Caco-2 (cell line): ENCODE measurements at regions of chr1 and their contacts with region 1.

Region 1: GRCh38 chr1:23577056-23578004 is 18.0 kb upstream of the ID3 start:
- DNase-seq: peak in 1 of 2 experiments; percentile 52
- H3K4me3 ChIP-seq: no peak overlapping the region
- H3K4me3 Mint-ChIP-seq: peak overlapping the region; percentile 64
- H3K27ac Mint-ChIP-seq: peak overlapping the region; percentile 96
- H3K4me1 ChIP-seq: peaks cover 49% of the 10 kb centered on the region
- H3K4me1 Mint-ChIP-seq: peaks cover 30% of the 10 kb centered on the region
- H3K27me3 ChIP-seq: no peaks in the 10 kb centered on the region
- H3K27me3 Mint-ChIP-seq: no peaks in the 10 kb centered on the region
- CTCF ChIP-seq: no peak

Region 2: DNA sequence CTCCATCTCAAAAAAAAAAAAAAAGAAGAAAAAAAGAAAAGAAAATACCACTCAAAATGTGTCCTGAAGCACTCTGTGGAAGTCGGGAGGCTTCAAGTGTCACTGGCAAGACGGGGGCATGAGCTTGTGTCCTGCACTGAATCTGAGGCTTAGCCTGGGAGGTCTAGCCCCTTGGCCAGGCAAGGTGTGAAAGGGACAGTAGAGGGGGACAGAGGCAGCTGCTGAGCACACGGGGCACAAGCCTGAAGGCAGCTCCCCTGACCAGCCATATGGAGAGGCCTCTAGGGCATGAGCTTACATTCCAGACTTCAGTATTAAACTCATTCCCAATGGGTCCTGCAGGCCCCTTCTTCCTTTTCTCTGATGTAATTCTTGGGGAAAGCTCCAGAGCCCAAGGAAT is 69.8 kb before region 1 on chr1:
- CTCF ChIA-PET with region 1: no interaction called
- POLR2A ChIA-PET with region 1: no interaction called
- intact Hi-C with region 1: no loop called
- DNase-seq: no peak
- H3K4me3 ChIP-seq: no peak overlapping the region
- H3K4me3 Mint-ChIP-seq: no peak overlapping the region
- H3K27ac Mint-ChIP-seq: no peak overlapping the region
- H3K4me1 ChIP-seq: no peaks in the 10 kb centered on the region
- H3K4me1 Mint-ChIP-seq: peaks cover 7% of the 10 kb centered on the region
- H3K27me3 ChIP-seq: no peaks in the 10 kb centered on the region
- H3K27me3 Mint-ChIP-seq: no peaks in the 10 kb centered on the region
- CTCF ChIP-seq: no peak

Region 3: DNA sequence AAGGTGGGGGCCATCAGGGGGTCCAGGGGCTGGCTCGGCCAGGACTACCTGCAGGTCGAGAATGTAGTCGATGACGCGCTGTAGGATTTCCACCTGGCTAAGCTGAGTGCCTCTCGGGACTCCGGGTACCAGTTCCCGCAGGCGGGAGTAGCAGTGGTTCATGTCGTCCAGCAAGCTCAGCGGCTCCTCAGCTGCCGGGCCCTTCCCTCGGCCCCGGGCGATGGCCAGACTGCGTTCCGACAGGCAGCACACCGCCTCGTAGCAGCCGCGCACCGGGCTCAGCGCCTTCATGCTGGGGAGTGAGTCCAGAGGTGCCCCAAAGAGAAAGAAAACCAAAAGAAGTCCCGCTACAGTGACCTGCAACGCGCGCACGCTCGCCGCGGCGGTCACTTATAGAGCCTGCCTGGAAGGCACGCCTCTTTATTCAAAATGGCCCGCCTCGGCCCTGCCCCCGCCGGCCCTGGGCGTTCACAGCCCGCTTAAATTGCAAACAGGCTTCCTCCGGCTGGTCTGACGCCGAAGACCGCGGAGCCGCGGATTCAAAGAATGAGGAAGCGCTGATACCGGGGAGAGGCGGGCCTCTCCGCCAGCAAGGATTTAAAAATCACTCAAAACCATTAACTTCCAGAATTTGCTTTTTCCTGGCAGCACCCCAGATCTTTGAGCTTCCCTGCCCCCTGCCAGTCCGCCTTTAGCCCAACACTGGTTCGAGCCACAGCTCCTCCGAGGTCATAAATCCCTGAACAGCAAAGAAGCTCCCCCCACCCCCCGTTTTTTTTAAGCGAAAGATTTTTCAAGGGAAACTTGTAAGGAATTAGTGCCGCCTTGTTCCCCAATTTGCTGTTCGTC is 18.0 kb before region 1 on chr1 and contains the start of gene ID3:
- CTCF ChIA-PET with region 1: interaction called, 10 read pairs
- POLR2A ChIA-PET with region 1: interaction called, 46 read pairs
- intact Hi-C with region 1: loop called (anchors 2 kb)
- DNase-seq: peak; percentile 92 to 94
- H3K4me3 ChIP-seq: peak within 1 kb of the TSS; percentile 68
- H3K4me3 Mint-ChIP-seq: peak within 1 kb of the TSS; percentile 87
- H3K27ac Mint-ChIP-seq: peak within 1 kb of the TSS; percentile 97
- H3K4me1 ChIP-seq: peaks cover 71% of the 10 kb centered on the region
- H3K4me1 Mint-ChIP-seq: peaks cover 46% of the 10 kb centered on the region
- H3K27me3 ChIP-seq: no peaks in the 10 kb centered on the region
- H3K27me3 Mint-ChIP-seq: no peaks in the 10 kb centered on the region
- CTCF ChIP-seq: no peak
- total RNA-seq, gene ID3: 13.7 and 18.0 TPM in 2 replicates

Region 4: DNA sequence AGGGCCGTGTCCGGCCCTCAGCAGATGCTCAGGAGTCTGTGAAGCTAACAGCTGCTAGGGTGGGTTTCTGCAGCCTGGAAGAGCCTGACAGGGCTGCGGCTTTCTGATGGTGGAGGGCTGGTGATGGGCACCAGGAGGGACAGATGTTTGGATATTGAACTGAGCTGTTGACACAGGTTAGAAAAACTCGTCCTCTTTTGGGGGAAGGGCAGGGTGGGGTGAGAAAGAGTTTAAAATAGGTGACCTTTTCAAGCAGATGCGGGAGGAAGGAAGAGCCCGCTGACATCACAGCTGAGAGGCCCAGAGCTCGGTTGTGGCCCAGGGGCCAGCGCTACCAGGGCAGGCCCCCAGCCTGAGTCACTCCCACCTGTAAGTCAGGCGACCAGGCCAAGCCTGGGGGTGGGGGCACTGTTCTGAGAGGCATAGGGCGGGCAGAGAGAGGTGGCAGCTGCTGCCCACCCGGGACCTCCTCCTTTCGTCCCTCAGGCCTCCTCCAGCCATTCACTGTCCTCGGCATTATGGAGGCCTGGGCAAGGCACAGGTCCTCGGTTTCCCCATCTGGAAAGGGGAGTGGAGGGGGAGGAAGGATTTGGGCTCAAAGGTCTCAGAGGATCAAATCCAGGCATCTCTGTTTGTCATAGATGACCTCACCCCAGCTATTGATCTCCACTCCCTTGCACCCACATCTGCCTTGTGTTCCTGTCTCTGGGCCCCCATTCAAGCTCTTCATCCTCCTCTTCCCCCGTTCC is 14.3 kb after region 1 on chr1:
- CTCF ChIA-PET with region 1: no interaction called
- POLR2A ChIA-PET with region 1: no interaction called
- intact Hi-C with region 1: loop called (anchors 2 kb)
- DNase-seq: no peak
- H3K4me3 ChIP-seq: no peak overlapping the region
- H3K4me3 Mint-ChIP-seq: no peak overlapping the region
- H3K27ac Mint-ChIP-seq: peak overlapping the region; percentile 13
- H3K4me1 ChIP-seq: peaks cover 12% of the 10 kb centered on the region; the same call in 1 of the 2 replicates
- H3K4me1 Mint-ChIP-seq: peaks cover 10% of the 10 kb centered on the region
- H3K27me3 ChIP-seq: no peaks in the 10 kb centered on the region
- H3K27me3 Mint-ChIP-seq: no peaks in the 10 kb centered on the region
- CTCF ChIP-seq: no peak

Region 5: DNA sequence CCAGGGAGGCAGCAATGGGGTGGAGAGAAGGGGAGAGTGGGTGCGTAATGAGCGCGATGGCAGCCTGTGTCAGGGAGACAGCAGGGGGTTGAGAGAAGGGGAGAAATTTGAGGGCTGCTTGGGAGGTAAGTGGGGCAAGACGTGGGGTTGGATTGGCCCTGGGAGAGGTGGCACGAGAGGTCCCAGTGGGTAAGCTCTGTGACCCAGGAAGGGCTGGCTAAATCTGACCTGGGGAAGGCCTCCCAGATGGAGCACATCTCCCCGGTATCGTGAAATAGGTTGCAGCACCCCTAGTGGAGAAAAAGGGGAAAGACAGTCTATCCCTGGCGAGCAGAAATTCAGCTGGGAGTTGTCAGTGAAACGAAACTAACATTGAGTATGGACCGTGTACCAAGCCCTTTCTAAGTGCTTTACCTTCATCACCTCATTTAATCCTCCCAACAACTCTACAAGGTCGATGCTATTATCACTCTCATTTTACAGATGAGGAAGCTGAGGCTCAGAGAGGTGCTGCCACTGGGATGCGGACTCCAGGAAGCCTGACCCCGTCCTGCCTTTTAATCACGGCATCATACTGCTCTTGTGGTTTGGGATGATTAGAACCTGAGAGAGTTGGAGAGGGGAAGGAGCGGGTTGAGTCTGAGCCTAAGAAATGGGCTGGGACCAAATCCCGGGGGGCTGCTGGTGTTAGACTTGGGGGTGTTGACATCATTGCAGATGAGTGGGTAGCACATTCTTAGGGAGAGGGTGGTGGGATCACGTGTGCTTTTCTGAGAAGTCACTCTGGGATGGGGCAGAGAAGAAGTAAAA is 57.7 kb after region 1 on chr1:
- CTCF ChIA-PET with region 1: interaction called, 22 read pairs
- POLR2A ChIA-PET with region 1: interaction called, 3 read pairs
- intact Hi-C with region 1: no loop called
- DNase-seq: peak; percentile 51 to 65
- H3K4me3 ChIP-seq: no peak overlapping the region
- H3K4me3 Mint-ChIP-seq: no peak overlapping the region
- H3K27ac Mint-ChIP-seq: no peak overlapping the region
- H3K4me1 ChIP-seq: no peaks in the 10 kb centered on the region
- H3K4me1 Mint-ChIP-seq: peaks cover 8% of the 10 kb centered on the region
- H3K27me3 ChIP-seq: no peaks in the 10 kb centered on the region
- H3K27me3 Mint-ChIP-seq: peaks cover 3% of the 10 kb centered on the region
- CTCF ChIP-seq: peak; percentile 75 to 81

Region 6: DNA sequence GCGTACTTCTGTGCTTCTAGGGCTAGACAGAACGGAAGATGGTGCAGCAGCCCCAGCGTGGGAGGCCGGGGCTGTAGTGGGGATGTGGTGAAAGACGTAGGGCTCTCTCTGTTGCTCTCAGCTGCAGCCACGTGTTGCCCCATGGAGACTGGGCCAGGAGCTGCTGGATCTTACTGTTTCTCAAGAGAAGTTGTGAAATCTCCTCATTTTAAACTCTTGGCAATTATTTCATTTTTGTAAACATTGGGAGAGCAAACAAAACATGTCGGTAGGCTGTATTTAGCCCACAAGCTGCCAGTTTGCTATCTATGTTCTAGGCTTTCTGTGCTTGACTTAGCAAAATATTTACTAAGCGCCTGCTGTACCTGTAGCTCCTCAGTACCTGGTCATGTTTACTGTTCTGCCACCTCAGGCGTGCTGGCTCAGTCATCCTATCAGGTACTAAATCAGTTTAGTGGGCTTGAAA is 150.1 kb after region 1 on chr1:
- CTCF ChIA-PET with region 1: no interaction called
- POLR2A ChIA-PET with region 1: no interaction called
- intact Hi-C with region 1: no loop called
- DNase-seq: peak; percentile 38 to 52
- H3K4me3 ChIP-seq: no peak overlapping the region
- H3K4me3 Mint-ChIP-seq: no peak overlapping the region
- H3K27ac Mint-ChIP-seq: peak overlapping the region; percentile 54
- H3K4me1 ChIP-seq: peaks cover 7% of the 10 kb centered on the region; the same call in 1 of the 2 replicates
- H3K4me1 Mint-ChIP-seq: peaks cover 17% of the 10 kb centered on the region
- H3K27me3 ChIP-seq: no peaks in the 10 kb centered on the region
- H3K27me3 Mint-ChIP-seq: no peaks in the 10 kb centered on the region
- CTCF ChIP-seq: no peak

Region 7: GRCh38 chr1:23763041-23763577 is 185.8 kb after region 1 on chr1:
- CTCF ChIA-PET with region 1: no interaction called
- POLR2A ChIA-PET with region 1: no interaction called
- intact Hi-C with region 1: no loop called
- DNase-seq: no peak
- H3K4me3 ChIP-seq: no peak overlapping the region
- H3K4me3 Mint-ChIP-seq: no peak overlapping the region
- H3K27ac Mint-ChIP-seq: no peak overlapping the region
- H3K4me1 ChIP-seq: no peaks in the 10 kb centered on the region
- H3K4me1 Mint-ChIP-seq: no peaks in the 10 kb centered on the region
- H3K27me3 ChIP-seq: no peaks in the 10 kb centered on the region
- H3K27me3 Mint-ChIP-seq: no peaks in the 10 kb centered on the region
- CTCF ChIP-seq: no peak

Region 8: DNA sequence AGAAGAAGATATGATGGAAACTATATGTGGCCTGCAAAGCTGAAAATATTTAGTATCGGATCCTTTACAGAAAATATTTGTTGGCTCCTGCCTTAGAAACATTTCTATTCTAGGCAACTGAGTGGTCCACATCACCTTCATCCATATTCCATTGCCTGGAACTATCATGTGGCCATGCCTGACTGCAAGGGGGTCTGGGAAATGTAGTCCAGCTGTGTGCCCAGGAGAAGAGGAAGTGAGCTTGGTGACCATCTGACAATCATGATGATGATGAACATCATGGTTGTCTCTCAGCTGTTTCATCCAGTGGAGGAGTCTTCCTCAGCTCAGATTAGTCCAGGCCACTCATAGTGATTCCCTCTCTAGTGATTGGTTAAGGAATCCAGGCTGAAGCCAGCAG is 671.5 kb after region 1 on chr1:
- CTCF ChIA-PET with region 1: no interaction called
- POLR2A ChIA-PET with region 1: no interaction called
- intact Hi-C with region 1: no loop called
- DNase-seq: no peak
- H3K4me3 ChIP-seq: no peak overlapping the region
- H3K4me3 Mint-ChIP-seq: no peak overlapping the region
- H3K27ac Mint-ChIP-seq: no peak overlapping the region
- H3K4me1 ChIP-seq: no peaks in the 10 kb centered on the region
- H3K4me1 Mint-ChIP-seq: no peaks in the 10 kb centered on the region
- H3K27me3 ChIP-seq: no peaks in the 10 kb centered on the region
- H3K27me3 Mint-ChIP-seq: no peaks in the 10 kb centered on the region
- CTCF ChIP-seq: no peak